Activated CD4-positive, alpha-beta T cell treated with anti-CD3 and anti-CD28 coated beads for 36 hours (primary cell): ENCODE measurements at regions of chr5 and their contacts with region 1.

Region 1: GRCh38 chr5:42950440-42951292 is 89.5 kb downstream of the ANXA2R start:
- DNase-seq: peak; percentile 82
- ATAC-seq: peak; percentile 59
- H3K4me3 Mint-ChIP-seq: peak overlapping the region; percentile 83
- H3K27ac Mint-ChIP-seq: peak overlapping the region; percentile 91
- H3K4me1 Mint-ChIP-seq: peaks cover 17% of the 10 kb centered on the region
- H3K27me3 Mint-ChIP-seq: no peaks in the 10 kb centered on the region

Region 2: DNA sequence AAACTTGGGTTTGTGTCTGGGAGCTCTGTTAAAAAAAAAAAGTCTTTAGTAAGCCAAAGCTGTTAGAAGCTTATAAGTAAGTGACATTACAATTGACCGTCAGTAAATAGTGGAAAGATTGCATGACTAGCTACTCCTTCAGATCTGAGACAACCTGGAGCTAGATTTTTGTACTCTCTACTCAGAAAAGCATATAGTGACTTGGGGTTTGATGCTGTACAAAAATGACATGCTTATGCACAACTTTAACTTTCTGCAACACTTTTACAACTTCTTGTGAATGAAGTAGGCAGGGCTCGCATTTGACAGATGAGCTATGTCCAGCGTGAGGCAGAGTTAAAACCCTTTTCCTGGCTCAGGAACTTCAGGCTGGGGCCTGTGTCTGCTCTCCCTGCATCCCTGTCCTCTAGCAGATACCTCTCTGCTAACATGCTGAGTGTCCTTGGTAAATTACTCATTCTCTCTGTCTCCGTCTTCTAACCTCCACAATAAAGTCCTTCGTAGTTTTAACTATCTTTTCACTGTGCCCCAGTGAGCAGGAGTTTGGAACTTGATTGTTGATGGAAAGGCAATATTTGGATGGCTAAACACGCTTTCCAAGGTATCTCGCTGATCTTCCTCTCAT is 527.9 kb before region 1 on chr5:
- CTCF ChIA-PET with region 1: no interaction called
- POLR2A ChIA-PET with region 1: no interaction called
- intact Hi-C with region 1: no loop called
- DNase-seq: no peak
- ATAC-seq: no peak
- H3K4me3 Mint-ChIP-seq: no peak overlapping the region
- H3K27ac Mint-ChIP-seq: no peak overlapping the region
- H3K4me1 Mint-ChIP-seq: no peaks in the 10 kb centered on the region
- H3K27me3 Mint-ChIP-seq: peaks cover 24% of the 10 kb centered on the region

Region 3: GRCh38 chr5:42720251-42720650 is 230.4 kb before region 1 on chr5:
- CTCF ChIA-PET with region 1: no interaction called
- POLR2A ChIA-PET with region 1: no interaction called
- intact Hi-C with region 1: no loop called
- DNase-seq: peak; percentile 4
- ATAC-seq: no peak
- H3K4me3 Mint-ChIP-seq: no peak overlapping the region
- H3K27ac Mint-ChIP-seq: no peak overlapping the region
- H3K4me1 Mint-ChIP-seq: peaks cover 15% of the 10 kb centered on the region
- H3K27me3 Mint-ChIP-seq: peaks cover 15% of the 10 kb centered on the region

Region 4: DNA sequence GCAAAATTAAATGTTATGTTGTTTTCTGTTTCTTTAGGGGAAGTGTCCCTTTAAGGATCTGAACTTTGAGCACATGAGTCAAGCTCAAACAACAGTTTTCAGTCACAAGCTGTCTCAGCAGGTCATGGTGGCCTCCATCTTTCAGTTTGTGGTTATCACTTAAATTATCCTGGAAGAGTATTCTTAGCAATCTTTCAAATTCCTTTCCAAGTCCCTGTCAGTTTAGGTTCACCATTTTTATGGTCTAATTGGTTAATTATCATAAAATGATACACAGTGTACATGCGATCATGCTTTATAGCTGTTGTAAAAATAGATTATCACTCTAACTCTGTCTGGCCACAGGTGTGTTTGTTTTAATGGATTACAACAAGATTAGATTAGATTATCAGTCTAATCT is 95.9 kb before region 1 on chr5:
- CTCF ChIA-PET with region 1: no interaction called
- POLR2A ChIA-PET with region 1: no interaction called
- intact Hi-C with region 1: no loop called
- DNase-seq: no peak
- ATAC-seq: peak; percentile 42
- H3K4me3 Mint-ChIP-seq: no peak overlapping the region
- H3K27ac Mint-ChIP-seq: no peak overlapping the region
- H3K4me1 Mint-ChIP-seq: peaks cover 4% of the 10 kb centered on the region
- H3K27me3 Mint-ChIP-seq: peaks cover 2% of the 10 kb centered on the region

Region 5: DNA sequence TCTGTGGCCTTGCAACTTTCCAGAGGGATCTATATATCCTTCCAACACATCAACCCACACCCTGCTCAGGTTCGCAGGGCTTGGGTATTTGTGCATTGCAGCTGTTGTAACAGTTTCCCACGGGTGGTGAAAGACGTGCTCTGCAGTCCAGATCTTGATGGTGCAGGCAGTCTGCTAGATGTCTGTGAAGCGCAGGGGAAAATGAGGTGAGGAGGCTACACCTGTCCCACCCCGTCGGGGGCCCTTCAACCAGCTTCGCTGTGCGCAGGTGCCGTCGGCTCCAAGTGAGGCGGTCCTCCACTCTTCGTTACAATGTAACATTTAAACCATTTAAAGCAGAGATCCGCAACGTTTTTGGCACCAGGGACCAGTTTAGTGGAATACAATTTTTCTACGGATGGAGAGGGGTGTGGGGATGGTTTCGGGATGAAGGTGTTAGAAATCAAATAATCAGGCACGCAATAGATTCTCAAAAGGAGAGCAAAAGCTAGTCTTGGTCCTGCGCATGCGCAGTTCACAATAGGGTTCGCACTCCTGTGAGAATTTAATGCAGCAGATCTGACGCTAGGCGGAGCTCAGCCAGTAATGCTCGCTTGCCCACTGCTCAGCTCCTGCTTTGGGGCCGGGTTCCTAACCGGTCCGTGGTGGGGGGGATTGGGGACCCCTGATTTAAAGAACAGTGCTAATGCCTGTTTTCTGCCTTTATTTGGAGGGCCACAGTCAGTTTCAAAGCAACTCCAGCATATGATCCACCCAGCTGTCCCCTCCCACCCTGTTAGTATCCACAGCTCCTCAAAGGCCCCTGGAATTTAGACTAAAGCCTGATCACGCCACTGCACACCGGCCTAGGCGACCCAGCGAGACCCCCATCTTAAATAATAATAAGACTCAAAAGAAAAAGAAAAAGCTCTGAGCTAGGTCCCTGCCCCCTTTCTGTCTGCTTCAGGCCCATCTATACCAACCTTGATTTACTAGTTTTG is 41.9 kb before region 1 on chr5:
- CTCF ChIA-PET with region 1: interaction called, 32 read pairs
- POLR2A ChIA-PET with region 1: interaction called, 4 read pairs
- intact Hi-C with region 1: loop called (anchors 1 to 2 kb)
- DNase-seq: peak; percentile 95
- ATAC-seq: peak; percentile 95
- H3K4me3 Mint-ChIP-seq: peak overlapping the region; percentile 75
- H3K27ac Mint-ChIP-seq: peak overlapping the region; percentile 48
- H3K4me1 Mint-ChIP-seq: peaks cover 14% of the 10 kb centered on the region
- H3K27me3 Mint-ChIP-seq: peaks cover 8% of the 10 kb centered on the region

Region 6: GRCh38 chr5:42994246-42995151 is 43.8 kb after region 1 on chr5:
- CTCF ChIA-PET with region 1: interaction called, 37 read pairs
- POLR2A ChIA-PET with region 1: interaction called, 16 read pairs
- intact Hi-C with region 1: loop called (anchors 1 kb)
- DNase-seq: peak; percentile 93
- ATAC-seq: peak; percentile 67
- H3K4me3 Mint-ChIP-seq: peak overlapping the region; percentile 98
- H3K27ac Mint-ChIP-seq: peak overlapping the region; percentile 100
- H3K4me1 Mint-ChIP-seq: peaks cover 25% of the 10 kb centered on the region
- H3K27me3 Mint-ChIP-seq: no peaks in the 10 kb centered on the region

Region 7: GRCh38 chr5:43008369-43009153 is 57.9 kb after region 1 on chr5:
- CTCF ChIA-PET with region 1: interaction called, 3 read pairs
- POLR2A ChIA-PET with region 1: interaction called, 4 read pairs
- intact Hi-C with region 1: loop called in 1 of 2 experiments (anchors 1 kb)
- DNase-seq: peak; percentile 94
- ATAC-seq: peak; percentile 64
- H3K4me3 Mint-ChIP-seq: peak overlapping the region; percentile 76
- H3K27ac Mint-ChIP-seq: peak overlapping the region; percentile 94
- H3K4me1 Mint-ChIP-seq: peaks cover 21% of the 10 kb centered on the region
- H3K27me3 Mint-ChIP-seq: no peaks in the 10 kb centered on the region

Region 8: GRCh38 chr5:43602461-43603343 is 652.0 kb after region 1 on chr5 and contains the start of gene NNT:
- CTCF ChIA-PET with region 1: interaction called, 3 read pairs
- POLR2A ChIA-PET with region 1: no interaction called
- intact Hi-C with region 1: loop called in 1 of 2 experiments (anchors 2 kb)
- DNase-seq: peak; percentile 89
- ATAC-seq: peak; percentile 76
- H3K4me3 Mint-ChIP-seq: peak within 1 kb of the TSS; percentile 95
- H3K27ac Mint-ChIP-seq: peak within 1 kb of the TSS; percentile 93
- H3K4me1 Mint-ChIP-seq: peaks cover 29% of the 10 kb centered on the region
- H3K27me3 Mint-ChIP-seq: no peaks in the 10 kb centered on the region
- total RNA-seq, gene NNT: 55.4 to 77.5 TPM

Region 9: GRCh38 chr5:44426944-44427343 is 1476.3 kb after region 1 on chr5:
- CTCF ChIA-PET with region 1: no interaction called
- POLR2A ChIA-PET with region 1: no interaction called
- intact Hi-C with region 1: no loop called
- DNase-seq: no peak
- ATAC-seq: no peak
- H3K4me3 Mint-ChIP-seq: no peak overlapping the region
- H3K27ac Mint-ChIP-seq: no peak overlapping the region
- H3K4me1 Mint-ChIP-seq: no peaks in the 10 kb centered on the region
- H3K27me3 Mint-ChIP-seq: no peaks in the 10 kb centered on the region

Region 10: DNA sequence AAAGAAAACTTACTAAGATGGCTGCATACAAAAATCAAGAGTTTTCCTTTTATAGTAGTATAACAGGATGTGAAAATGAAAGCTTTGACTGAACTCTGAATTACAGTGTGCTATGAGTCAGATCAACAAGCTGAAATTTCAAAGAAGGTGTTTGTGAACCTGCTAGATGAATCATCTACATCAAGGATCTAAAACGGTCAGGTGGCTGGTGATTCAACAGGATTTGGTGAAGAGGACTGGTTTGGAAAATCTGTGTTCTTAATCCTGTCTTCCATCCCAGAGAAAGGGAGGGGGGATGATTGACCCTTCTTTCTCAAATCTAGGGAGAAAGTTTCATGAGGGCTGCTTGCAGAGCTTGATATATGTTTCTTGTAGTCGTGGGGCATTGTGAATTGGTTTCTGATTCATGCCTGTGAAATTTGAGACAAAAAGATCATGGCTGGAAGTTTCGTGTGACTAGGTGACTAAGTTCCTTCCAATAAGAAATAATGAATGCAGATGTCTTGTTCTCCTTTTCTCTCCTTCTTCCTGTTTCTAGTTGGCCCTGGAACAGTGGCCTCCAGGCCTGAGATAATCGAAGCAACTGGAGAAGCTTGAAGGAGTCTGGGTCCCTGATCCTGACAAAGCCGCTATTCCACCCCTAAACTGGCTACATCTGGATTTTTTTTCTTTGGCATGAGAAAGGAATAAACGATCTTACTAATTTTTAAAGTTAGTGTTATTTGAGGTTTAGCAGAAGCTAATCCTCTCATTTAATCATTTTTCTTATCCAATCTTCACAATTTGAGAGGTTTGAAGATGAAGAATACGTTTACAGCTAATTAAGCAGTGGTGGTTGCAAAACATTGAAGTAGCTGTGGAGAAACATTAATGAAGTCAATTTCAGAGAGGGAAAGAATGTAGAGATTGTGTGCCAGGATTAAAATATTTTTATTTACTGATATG is 1925.3 kb after region 1 on chr5:
- CTCF ChIA-PET with region 1: no interaction called
- POLR2A ChIA-PET with region 1: no interaction called
- intact Hi-C with region 1: loop called in 1 of 2 experiments (anchors 5 kb)
- DNase-seq: peak; percentile 49
- ATAC-seq: peak; percentile 99
- H3K4me3 Mint-ChIP-seq: no peak overlapping the region
- H3K27ac Mint-ChIP-seq: peak overlapping the region; percentile 89
- H3K4me1 Mint-ChIP-seq: peaks cover 23% of the 10 kb centered on the region
- H3K27me3 Mint-ChIP-seq: no peaks in the 10 kb centered on the region